OCI-LY7 (cell line): ENCODE measurements at regions of chr1 and their contacts with region 1.

Region 1: GRCh38 chr1:151405167-151405951 is 6.0 kb downstream of the PSMB4 start:
- DNase-seq: no peak
- H3K4me3 ChIP-seq: no peak overlapping the region
- H3K27ac ChIP-seq: no peak overlapping the region
- H3K4me1 ChIP-seq: peaks cover 7% of the 10 kb centered on the region
- CTCF ChIP-seq: no peak

Region 2: GRCh38 chr1:151222130-151222529 is 183.2 kb before region 1 on chr1:
- CTCF ChIA-PET with region 1: no interaction called
- POLR2A ChIA-PET with region 1: no interaction called
- intact Hi-C with region 1: no loop called
- DNase-seq: no peak
- H3K4me3 ChIP-seq: no peak overlapping the region
- H3K27ac ChIP-seq: no peak overlapping the region
- H3K4me1 ChIP-seq: no peaks in the 10 kb centered on the region
- CTCF ChIP-seq: no peak

Region 3: DNA sequence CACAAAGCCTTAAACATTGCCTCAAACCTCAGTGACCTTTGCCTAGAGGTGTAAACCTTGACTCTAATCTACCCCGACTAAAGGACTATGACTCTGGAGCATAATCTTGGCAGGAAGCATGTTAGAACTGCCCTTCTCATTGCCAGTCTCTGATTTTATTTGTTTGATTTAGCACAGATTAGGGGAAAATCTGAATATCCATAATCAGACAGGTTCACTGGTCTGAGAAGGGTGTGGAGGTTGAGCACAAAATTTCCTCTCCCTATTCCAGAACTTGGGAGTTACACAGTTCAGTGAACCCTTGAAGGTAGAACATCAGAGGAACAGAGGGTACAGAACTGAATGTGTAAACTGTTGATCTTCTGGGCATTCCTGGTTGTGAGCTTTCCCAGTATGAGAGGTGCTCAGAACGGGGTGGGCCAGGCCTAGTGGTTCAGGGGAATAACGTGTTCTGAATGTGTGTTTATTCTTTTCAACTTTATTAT is 14.2 kb before region 1 on chr1:
- CTCF ChIA-PET with region 1: no interaction called
- POLR2A ChIA-PET with region 1: interaction called, 11 read pairs
- intact Hi-C with region 1: no loop called
- DNase-seq: no peak
- H3K4me3 ChIP-seq: no peak overlapping the region
- H3K27ac ChIP-seq: no peak overlapping the region
- H3K4me1 ChIP-seq: no peaks in the 10 kb centered on the region
- CTCF ChIP-seq: no peak

Region 4: DNA sequence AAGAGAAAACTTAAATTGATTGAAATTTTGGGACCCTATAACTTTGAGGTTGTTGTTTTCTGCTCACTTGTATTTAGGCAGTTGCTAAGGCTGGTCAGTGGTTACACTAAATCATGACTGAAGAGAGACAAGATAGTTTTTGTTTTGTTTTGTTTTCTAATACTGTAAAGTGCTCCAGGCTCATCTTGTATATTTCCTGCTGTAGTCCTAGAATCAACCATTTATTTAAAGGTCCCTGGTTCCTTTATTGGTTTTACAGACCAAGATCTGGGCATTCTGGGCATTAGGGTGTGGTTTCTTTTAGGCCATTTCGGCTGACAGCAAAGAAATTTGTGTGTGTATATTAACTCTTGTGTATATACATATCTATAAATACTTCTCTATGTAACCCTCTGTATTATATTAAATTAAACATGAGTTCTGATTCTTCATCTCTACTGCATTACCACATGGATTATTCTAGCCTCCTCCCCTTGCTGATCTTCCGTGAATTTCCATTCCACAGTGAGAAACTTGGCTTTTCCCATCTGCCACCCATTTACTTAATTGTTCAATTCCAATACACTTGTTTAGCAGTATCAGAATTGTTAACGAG is 221.5 kb after region 1 on chr1:
- CTCF ChIA-PET with region 1: no interaction called
- POLR2A ChIA-PET with region 1: no interaction called
- intact Hi-C with region 1: no loop called
- DNase-seq: no peak
- H3K4me3 ChIP-seq: no peak overlapping the region
- H3K27ac ChIP-seq: no peak overlapping the region
- H3K4me1 ChIP-seq: no peaks in the 10 kb centered on the region
- CTCF ChIP-seq: no peak